ENCODE measurements at regions of chr6 and their contacts with region 1.

Region 1: GRCh38 chr6:153002607-153003365 is at the start of gene MTRF1L:
- DNase-seq: peak; percentile 87 to 88
- ATAC-seq: peak; percentile 98 to 99
- H3K4me3 ChIP-seq: peak within 1 kb of the TSS; percentile 74 to 89 (median 84)
- H3K27ac ChIP-seq: peak within 1 kb of the TSS; percentile 81 to 93 (median 88)
- H3K4me1 ChIP-seq: peaks cover 32 to 37% of the 10 kb centered on the region in 2 donors
- H3K27me3 ChIP-seq: no peaks in the 10 kb centered on the region
- CTCF ChIP-seq: peak in 2 of 5 experiments; percentile 1 to 22
- POLR2A ChIP-seq: peak; percentile 75 to 86
- total RNA-seq, gene MTRF1L: 17.8 to 24.9 (median 22.5) TPM

Region 2: DNA sequence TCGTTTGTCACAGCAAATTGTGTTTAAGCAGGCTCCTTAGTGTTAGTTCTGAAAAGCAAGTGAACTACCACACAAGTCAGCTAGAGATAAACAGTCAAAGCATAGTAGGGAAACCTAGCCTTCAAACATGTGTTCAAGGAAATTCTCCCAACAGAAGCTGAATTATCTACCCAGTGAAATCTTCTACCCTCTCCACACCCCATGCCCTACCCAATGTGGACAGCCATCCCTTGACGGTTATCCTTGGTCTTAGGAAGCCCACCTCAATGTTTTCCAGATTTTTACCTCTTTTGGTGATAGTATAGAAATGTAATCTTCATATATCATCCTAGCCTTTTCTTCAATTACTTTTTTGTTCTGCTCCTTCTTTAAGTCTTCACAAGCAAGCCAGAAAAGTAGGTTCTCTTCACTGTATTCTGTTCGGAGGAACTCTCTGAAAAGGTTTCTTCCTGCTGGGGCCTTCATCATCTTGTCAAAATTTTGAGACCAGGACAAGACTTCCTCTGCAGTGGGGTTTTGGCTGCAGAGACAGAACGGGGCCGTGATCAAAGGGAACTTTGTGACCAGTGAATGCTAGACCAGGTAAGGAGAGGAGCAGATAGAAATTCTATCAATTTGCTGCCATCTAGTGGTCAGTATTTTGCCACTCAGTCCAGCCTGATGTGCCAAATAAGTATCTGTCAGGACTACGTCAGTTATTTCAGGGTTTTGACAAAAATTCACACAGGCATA is 21.4 kb after region 1 on chr6:
- in situ Hi-C with region 1: no loop called
- intact Hi-C with region 1: loop called (anchors 1 kb)
- DNase-seq: no peak
- ATAC-seq: peak; percentile 80 to 91
- H3K4me3 ChIP-seq: no peak overlapping the region
- H3K27ac ChIP-seq: no peak overlapping the region
- H3K4me1 ChIP-seq: no peaks in the 10 kb centered on the region
- H3K27me3 ChIP-seq: no peaks in the 10 kb centered on the region
- CTCF ChIP-seq: peak; percentile 45 to 79 (median 69)
- POLR2A ChIP-seq: no peak

Measured in gastrocnemius medialis (tissue), 4 donors.